Posterior cingulate gyrus (tissue), 11 donors: ENCODE measurements at regions of chr7 and their contacts with region 1.

Region 1: DNA sequence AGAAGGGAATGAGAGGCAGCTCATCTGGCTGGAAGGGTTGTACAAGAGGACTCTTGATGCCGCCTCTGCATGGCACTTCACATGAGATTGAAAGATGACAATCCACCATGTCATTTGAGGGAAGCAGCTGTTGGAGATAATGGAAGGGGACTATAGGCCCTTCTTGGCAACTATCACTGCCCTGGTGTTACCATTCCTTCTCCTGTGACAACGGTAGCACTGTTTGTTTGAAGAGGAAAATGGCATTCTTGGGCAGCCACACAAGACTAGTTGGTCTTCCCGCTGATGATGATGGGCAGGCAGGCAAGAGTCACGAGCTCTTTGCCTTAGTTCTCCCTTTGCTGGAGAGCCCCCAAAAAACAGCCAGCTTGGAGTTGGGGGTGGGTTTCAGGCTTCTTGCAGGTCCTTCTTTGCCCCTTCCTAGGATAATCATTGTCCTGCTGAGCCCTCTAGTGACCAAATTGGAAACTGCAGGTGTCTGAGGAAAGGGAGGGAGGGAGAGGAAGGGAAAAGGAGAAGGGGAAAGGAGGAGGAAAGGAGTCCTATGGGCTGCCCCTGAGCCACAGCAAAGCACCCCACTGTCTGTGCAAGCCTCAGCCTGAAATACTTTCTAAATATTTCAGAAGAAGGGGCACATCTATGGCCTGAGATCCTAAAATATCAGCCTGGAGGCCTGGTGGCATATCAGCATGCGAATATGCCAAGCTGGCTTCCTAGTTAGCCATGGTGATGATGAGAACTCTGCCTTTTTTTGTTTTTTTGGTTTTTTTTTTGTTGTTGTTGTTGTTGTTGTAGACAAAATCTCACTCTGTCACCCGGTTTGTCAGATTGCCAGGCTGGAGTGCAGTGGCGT is 165.6 kb upstream of the KMT2E start:
- DNase-seq: peak in 6 of 10 donors; percentile 19 to 85 (median 74)

Region 2: GRCh38 chr7:104231054-104232046 is 617.0 kb before region 1 on chr7:
- intact Hi-C with region 1: loop called (anchors 5 kb)
- DNase-seq: peak in 8 of 10 donors; percentile 35 to 90 (median 44)

Region 3: DNA sequence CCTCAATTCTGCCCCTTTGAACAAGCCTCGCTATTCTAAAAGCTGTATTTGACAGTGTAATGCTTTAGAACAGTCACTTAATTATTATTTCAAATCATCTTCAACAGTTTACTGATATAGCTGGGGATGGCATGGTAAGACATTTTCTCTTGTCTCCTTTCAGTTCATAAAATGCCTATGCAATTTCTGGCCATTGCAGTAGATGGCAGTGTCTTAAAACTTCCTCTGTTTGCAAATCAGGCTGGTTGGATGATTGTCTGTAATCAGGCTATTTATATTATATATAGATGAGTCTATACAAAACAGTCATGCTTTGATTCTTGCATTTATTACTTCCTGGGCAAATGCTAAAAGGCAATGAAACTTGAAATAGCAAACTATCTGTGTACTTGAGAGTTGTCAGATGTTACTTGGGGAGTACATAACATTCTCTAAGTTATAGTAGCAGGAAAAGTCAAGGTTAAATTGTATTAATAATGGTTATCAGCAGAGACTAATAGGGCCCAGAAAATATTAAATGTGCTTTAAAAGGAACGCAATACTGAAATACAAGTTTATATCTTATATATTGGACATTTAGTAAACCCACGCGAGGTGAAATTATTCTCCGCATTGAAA is 575.5 kb before region 1 on chr7:
- intact Hi-C with region 1: loop called (anchors 2 kb)
- DNase-seq: no peak

Region 4: GRCh38 chr7:104341546-104341945 is 506.8 kb before region 1 on chr7:
- intact Hi-C with region 1: loop called (anchors 2 kb)
- DNase-seq: peak in 3 of 10 donors; percentile 16 to 36 (median 22)

Region 5: GRCh38 chr7:104643587-104644217 is 204.7 kb before region 1 on chr7:
- intact Hi-C with region 1: loop called (anchors 5 kb)
- DNase-seq: no peak

Region 6: GRCh38 chr7:104767826-104768536 is 80.4 kb before region 1 on chr7:
- intact Hi-C with region 1: loop called (anchors 1 kb)
- DNase-seq: peak in 2 of 10 donors; percentile 16 to 32

Region 7: GRCh38 chr7:104791080-104791479 is 57.3 kb before region 1 on chr7:
- intact Hi-C with region 1: loop called (anchors 10 kb)
- DNase-seq: no peak